H1 (cell line): ENCODE measurements at regions of chr1 and their contacts with region 1.

Region 1: GRCh38 chr1:33007190-33008050 is 29.3 kb downstream of the AK2 start:
- DNase-seq: no peak
- H3K4me3 ChIP-seq: no peak overlapping the region
- H3K27ac ChIP-seq: no peak overlapping the region
- H3K4me1 ChIP-seq: peaks cover 0 to 4% (median 2%) of the 10 kb centered on the region in 4 experiments; a peak in 4 of 7 replicates
- H3K27me3 ChIP-seq: no peaks in the 10 kb centered on the region
- CTCF ChIP-seq: peak in 2 of 3 experiments; percentile 19 to 38; a peak in 3 of 4 replicates
- EP300 ChIP-seq: no peak
- POLR2A ChIP-seq: no peak
- RAD21 ChIP-seq: peak; percentile 17 to 44; a peak in 3 of 4 replicates

Region 2: DNA sequence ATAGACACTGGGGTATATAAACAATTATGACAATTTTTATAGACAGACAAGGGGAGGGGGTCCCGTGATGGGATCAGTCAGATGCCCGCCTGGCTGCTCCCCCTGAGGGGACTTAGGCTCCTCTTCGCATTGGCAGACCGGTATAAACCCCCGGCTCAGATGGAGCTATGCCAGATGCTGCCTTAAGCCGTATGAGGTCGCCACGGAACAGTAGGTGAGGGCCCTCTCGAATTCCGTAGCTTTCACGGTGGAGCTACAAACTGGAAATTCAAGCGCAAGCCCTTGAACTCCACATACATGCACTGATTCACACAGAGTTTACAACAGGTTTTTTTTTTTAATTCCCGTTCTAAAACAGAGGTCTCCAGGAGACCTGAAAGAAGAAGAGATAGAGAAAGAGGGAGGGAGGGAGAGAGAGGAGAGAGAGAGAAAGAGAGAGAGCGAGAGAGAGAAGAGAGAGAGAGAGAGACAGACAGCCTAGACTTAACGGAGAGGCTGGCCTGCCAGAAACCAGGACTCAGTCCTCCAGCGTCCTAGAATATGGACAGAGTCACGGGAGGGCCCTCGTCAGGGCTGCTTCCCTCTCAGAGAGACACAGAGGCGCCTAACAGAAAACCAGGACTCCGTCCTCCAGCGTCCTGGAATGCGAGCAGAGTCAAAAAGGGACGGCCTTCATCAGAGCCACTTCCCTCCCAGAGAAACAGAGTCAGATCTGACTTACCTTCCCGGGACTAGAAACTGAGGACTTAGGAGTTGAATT is 81.8 kb before region 1 on chr1:
- CTCF ChIA-PET with region 1: interaction called, 10 read pairs
- POLR2A ChIA-PET with region 1: interaction called, 3 read pairs
- DNase-seq: peak; percentile 21 to 61
- H3K4me3 ChIP-seq: peak overlapping the region; percentile 44 to 58 (median 54); a peak in 7 of 8 replicates
- H3K27ac ChIP-seq: no peak overlapping the region
- H3K4me1 ChIP-seq: peaks cover 0 to 4% (median 2%) of the 10 kb centered on the region in 4 experiments; a peak in 5 of 7 replicates
- H3K27me3 ChIP-seq: peaks cover 12 to 52% (median 49%) of the 10 kb centered on the region in 4 experiments
- CTCF ChIP-seq: peak in 2 of 3 experiments; percentile 18 to 28; a peak in 3 of 4 replicates
- EP300 ChIP-seq: no peak
- POLR2A ChIP-seq: no peak
- RAD21 ChIP-seq: peak; percentile 9 to 49; a peak in 2 of 4 replicates

Region 3: GRCh38 chr1:32964461-32965250 is 42.8 kb before region 1 on chr1 and contains the start of gene RNF19B:
- CTCF ChIA-PET with region 1: no interaction called
- POLR2A ChIA-PET with region 1: interaction called, 21 read pairs
- DNase-seq: peak; percentile 80 to 96
- H3K4me3 ChIP-seq: peak within 1 kb of the TSS; percentile 70 to 83 (median 70)
- H3K27ac ChIP-seq: peak within 1 kb of the TSS; percentile 58; the same call in 1 of the 2 replicates
- H3K4me1 ChIP-seq: peaks cover 0 to 5% (median 1%) of the 10 kb centered on the region in 4 experiments; a peak in 3 of 7 replicates
- H3K27me3 ChIP-seq: peaks cover 0 to 6% (median 0%) of the 10 kb centered on the region in 4 experiments; a peak in 2 of 7 replicates
- CTCF ChIP-seq: no peak; a peak in 1 of 4 replicates
- EP300 ChIP-seq: no peak
- POLR2A ChIP-seq: peak; percentile 94 to 96
- RAD21 ChIP-seq: no peak
- total RNA-seq, gene RNF19B: 10.4 and 11.2 TPM in 2 replicates

Region 4: GRCh38 chr1:32992489-32993323 is 14.7 kb before region 1 on chr1:
- CTCF ChIA-PET with region 1: interaction called, 44 read pairs
- POLR2A ChIA-PET with region 1: interaction called, 12 read pairs
- DNase-seq: peak in 1 of 2 experiments; percentile 66
- H3K4me3 ChIP-seq: no peak overlapping the region
- H3K27ac ChIP-seq: no peak overlapping the region; the same call in 1 of the 2 replicates
- H3K4me1 ChIP-seq: peaks cover 0 to 15% (median 8%) of the 10 kb centered on the region in 4 experiments; a peak in 5 of 7 replicates
- H3K27me3 ChIP-seq: peaks cover 0 to 1% (median 0%) of the 10 kb centered on the region in 4 experiments; a peak in 1 of 7 replicates
- CTCF ChIP-seq: no peak
- EP300 ChIP-seq: no peak
- POLR2A ChIP-seq: no peak
- RAD21 ChIP-seq: 0 out of 4 replicates have a peak, but pooled peaks of 1 of the 2 experiments have one; percentile 6

Region 5: GRCh38 chr1:33045246-33045645 is 37.8 kb after region 1 on chr1:
- CTCF ChIA-PET with region 1: no interaction called
- POLR2A ChIA-PET with region 1: no interaction called
- DNase-seq: no peak
- H3K4me3 ChIP-seq: no peak overlapping the region
- H3K27ac ChIP-seq: no peak overlapping the region
- H3K4me1 ChIP-seq: peaks cover 0 to 3% (median 1%) of the 10 kb centered on the region in 4 experiments; a peak in 2 of 7 replicates
- H3K27me3 ChIP-seq: no peaks in the 10 kb centered on the region
- CTCF ChIP-seq: no peak
- EP300 ChIP-seq: no peak
- POLR2A ChIP-seq: no peak
- RAD21 ChIP-seq: no peak